ENCODE measurements at regions of chr2 and their contacts with region 1.

Region 1: GRCh38 chr2:200811336-200812121 is at the start of gene BZW1:
- DNase-seq: peak; percentile 94
- ATAC-seq: peak; percentile 80
- H3K4me3 Mint-ChIP-seq: peak within 1 kb of the TSS; percentile 98
- H3K27ac Mint-ChIP-seq: peak within 1 kb of the TSS; percentile 99
- H3K4me1 Mint-ChIP-seq: peaks cover 34% of the 10 kb centered on the region
- H3K27me3 Mint-ChIP-seq: no peaks in the 10 kb centered on the region
- CTCF ChIP-seq: no peak
- total RNA-seq, gene BZW1: 174 and 197 TPM in 2 replicates

Region 2: GRCh38 chr2:199911052-199911876 is 900.3 kb before region 1 on chr2 and contains the start of gene C2orf69:
- CTCF ChIA-PET with region 1: no interaction called
- POLR2A ChIA-PET with region 1: no interaction called
- intact Hi-C with region 1: loop called (anchors 1 kb)
- DNase-seq: peak; percentile 86
- ATAC-seq: peak; percentile 83
- H3K4me3 Mint-ChIP-seq: peak within 1 kb of the TSS; percentile 94
- H3K27ac Mint-ChIP-seq: peak within 1 kb of the TSS; percentile 94
- H3K4me1 Mint-ChIP-seq: peaks cover 35% of the 10 kb centered on the region
- H3K27me3 Mint-ChIP-seq: no peaks in the 10 kb centered on the region
- CTCF ChIP-seq: no peak
- total RNA-seq, gene C2orf69: 12.1 and 12.6 TPM in 2 replicates

Region 3: GRCh38 chr2:200525882-200526651 is 285.5 kb before region 1 on chr2 and contains the start of gene SGO2:
- CTCF ChIA-PET with region 1: no interaction called
- POLR2A ChIA-PET with region 1: no interaction called
- intact Hi-C with region 1: loop called (anchors 1 kb)
- DNase-seq: peak; percentile 90
- ATAC-seq: peak; percentile 100
- H3K4me3 Mint-ChIP-seq: peak within 1 kb of the TSS; percentile 95
- H3K27ac Mint-ChIP-seq: peak within 1 kb of the TSS; percentile 80
- H3K4me1 Mint-ChIP-seq: peaks cover 14% of the 10 kb centered on the region
- H3K27me3 Mint-ChIP-seq: peaks cover 5% of the 10 kb centered on the region
- CTCF ChIP-seq: no peak
- total RNA-seq, gene SGO2: 3.3 and 3.8 TPM in 2 replicates

Region 4: GRCh38 chr2:200864176-200864976 is 52.8 kb after region 1 on chr2 and contains the start of gene CLK1:
- CTCF ChIA-PET with region 1: no interaction called
- POLR2A ChIA-PET with region 1: interaction called, 41 read pairs
- intact Hi-C with region 1: loop called (anchors 1 kb)
- DNase-seq: peak; percentile 90
- ATAC-seq: peak; percentile 82
- H3K4me3 Mint-ChIP-seq: peak within 1 kb of the TSS; percentile 100
- H3K27ac Mint-ChIP-seq: peak within 1 kb of the TSS; percentile 100
- H3K4me1 Mint-ChIP-seq: peaks cover 41% of the 10 kb centered on the region
- H3K27me3 Mint-ChIP-seq: no peaks in the 10 kb centered on the region
- CTCF ChIP-seq: no peak
- total RNA-seq, gene CLK1: 173 and 203 TPM in 2 replicates

Region 5: GRCh38 chr2:201071479-201072200 is 260.1 kb after region 1 on chr2 and contains the starts of genes HYCC2 and NDUFB3:
- CTCF ChIA-PET with region 1: no interaction called
- POLR2A ChIA-PET with region 1: no interaction called
- intact Hi-C with region 1: loop called (anchors 1 kb)
- DNase-seq: peak; percentile 77
- ATAC-seq: peak; percentile 96
- H3K4me3 Mint-ChIP-seq: peak within 1 kb of the TSS; percentile 98
- H3K27ac Mint-ChIP-seq: peak within 1 kb of the TSS; percentile 96
- H3K4me1 Mint-ChIP-seq: peaks cover 50% of the 10 kb centered on the region
- H3K27me3 Mint-ChIP-seq: no peaks in the 10 kb centered on the region
- CTCF ChIP-seq: no peak
- total RNA-seq, gene HYCC2: 32.0 and 39.6 TPM in 2 replicates
- total RNA-seq, gene NDUFB3: 85.4 and 94.2 TPM in 2 replicates

Region 6: GRCh38 chr2:201780674-201781581 is 969.4 kb after region 1 on chr2 and contains the start of gene ALS2:
- CTCF ChIA-PET with region 1: no interaction called
- POLR2A ChIA-PET with region 1: no interaction called
- intact Hi-C with region 1: loop called (anchors 1 kb)
- DNase-seq: peak; percentile 95
- ATAC-seq: peak; percentile 90
- H3K4me3 Mint-ChIP-seq: peak within 1 kb of the TSS; percentile 96
- H3K27ac Mint-ChIP-seq: peak within 1 kb of the TSS; percentile 95
- H3K4me1 Mint-ChIP-seq: peaks cover 17% of the 10 kb centered on the region
- H3K27me3 Mint-ChIP-seq: peaks cover 8% of the 10 kb centered on the region
- CTCF ChIP-seq: no peak
- total RNA-seq, gene ALS2: 11.6 and 14.2 TPM in 2 replicates